Activated B cell treated with CpG ODN at 0.5 μM for 24 hours (primary cell): ENCODE measurements at regions of chr4 and their contacts with region 1.

Region 1: GRCh38 chr4:74311696-74312313 is 3.5 kb downstream of the EPGN start:
- DNase-seq: no peak
- ATAC-seq: peak; percentile 40
- H3K4me3 Mint-ChIP-seq: no peak overlapping the region
- H3K27ac Mint-ChIP-seq: no peak overlapping the region
- H3K4me1 Mint-ChIP-seq: peaks cover 5% of the 10 kb centered on the region
- H3K27me3 Mint-ChIP-seq: no peaks in the 10 kb centered on the region
- CTCF ChIP-seq: no peak

Region 2: GRCh38 chr4:73662709-73663546 is 648.9 kb before region 1 on chr4:
- CTCF ChIA-PET with region 1: no interaction called
- POLR2A ChIA-PET with region 1: no interaction called
- intact Hi-C with region 1: loop called (anchors 10 kb)
- DNase-seq: no peak
- ATAC-seq: no peak
- H3K4me3 Mint-ChIP-seq: no peak overlapping the region
- H3K27ac Mint-ChIP-seq: no peak overlapping the region
- H3K4me1 Mint-ChIP-seq: no peaks in the 10 kb centered on the region
- H3K27me3 Mint-ChIP-seq: no peaks in the 10 kb centered on the region
- CTCF ChIP-seq: no peak

Region 3: GRCh38 chr4:73729534-73730165 is 582.2 kb before region 1 on chr4:
- CTCF ChIA-PET with region 1: no interaction called
- POLR2A ChIA-PET with region 1: no interaction called
- intact Hi-C with region 1: loop called (anchors 5 kb)
- DNase-seq: no peak
- ATAC-seq: no peak
- H3K4me3 Mint-ChIP-seq: no peak overlapping the region
- H3K27ac Mint-ChIP-seq: no peak overlapping the region
- H3K4me1 Mint-ChIP-seq: no peaks in the 10 kb centered on the region
- H3K27me3 Mint-ChIP-seq: peaks cover 7% of the 10 kb centered on the region
- CTCF ChIP-seq: no peak

Region 4: DNA sequence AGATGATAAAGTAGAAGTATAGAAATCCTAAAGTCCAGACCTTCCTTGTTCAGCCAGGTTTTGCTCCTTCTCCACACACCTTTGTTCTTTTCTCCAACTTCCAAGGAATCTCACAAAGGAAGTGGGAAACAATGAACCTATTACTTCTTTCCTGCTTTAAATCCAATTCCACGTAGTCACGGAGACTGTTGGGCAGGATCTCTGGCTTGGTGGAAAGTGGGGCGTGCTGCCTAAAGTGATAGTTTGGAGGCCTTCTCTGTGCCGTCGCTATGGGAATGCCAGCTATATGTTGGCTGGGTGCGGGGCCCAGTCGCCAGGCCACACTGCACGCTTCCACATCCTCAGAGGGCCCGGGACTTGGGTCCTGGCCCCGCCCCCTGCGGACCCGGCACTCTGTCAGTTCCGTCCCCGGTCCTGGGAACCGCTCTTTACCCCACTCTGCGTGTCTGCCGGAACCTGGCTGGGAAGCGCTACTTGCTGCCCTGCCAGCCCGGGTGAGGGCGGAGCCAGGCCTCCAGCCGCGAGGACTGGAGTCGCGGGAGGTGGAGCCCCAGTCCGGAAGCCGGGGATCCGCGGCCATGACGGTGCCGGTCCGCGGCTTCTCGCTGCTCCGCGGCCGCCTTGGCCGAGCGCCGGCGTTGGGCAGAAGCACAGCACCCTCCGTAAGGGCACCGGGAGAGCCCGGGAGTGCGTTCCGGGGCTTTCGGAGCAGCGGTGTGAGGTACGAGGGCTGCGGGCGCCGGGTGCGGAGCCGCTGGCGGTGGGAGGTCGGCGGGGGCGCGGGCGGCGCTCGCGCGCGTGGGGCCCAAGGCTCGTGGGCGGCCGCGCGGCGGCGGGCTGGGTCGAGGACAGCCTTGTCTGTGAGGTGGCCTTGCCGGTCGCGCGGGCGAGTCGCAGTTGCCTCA is 154.0 kb before region 1 on chr4 and contains the start of gene MTHFD2L:
- CTCF ChIA-PET with region 1: no interaction called
- POLR2A ChIA-PET with region 1: no interaction called
- intact Hi-C with region 1: no loop called
- DNase-seq: peak; percentile 83
- ATAC-seq: peak; percentile 97
- H3K4me3 Mint-ChIP-seq: peak within 1 kb of the TSS; percentile 92
- H3K27ac Mint-ChIP-seq: peak within 1 kb of the TSS; percentile 80
- H3K4me1 Mint-ChIP-seq: peaks cover 18% of the 10 kb centered on the region
- H3K27me3 Mint-ChIP-seq: peaks cover 6% of the 10 kb centered on the region
- CTCF ChIP-seq: no peak
- total RNA-seq, gene MTHFD2L: 12.0 and 14.3 TPM in 2 replicates

Region 5: DNA sequence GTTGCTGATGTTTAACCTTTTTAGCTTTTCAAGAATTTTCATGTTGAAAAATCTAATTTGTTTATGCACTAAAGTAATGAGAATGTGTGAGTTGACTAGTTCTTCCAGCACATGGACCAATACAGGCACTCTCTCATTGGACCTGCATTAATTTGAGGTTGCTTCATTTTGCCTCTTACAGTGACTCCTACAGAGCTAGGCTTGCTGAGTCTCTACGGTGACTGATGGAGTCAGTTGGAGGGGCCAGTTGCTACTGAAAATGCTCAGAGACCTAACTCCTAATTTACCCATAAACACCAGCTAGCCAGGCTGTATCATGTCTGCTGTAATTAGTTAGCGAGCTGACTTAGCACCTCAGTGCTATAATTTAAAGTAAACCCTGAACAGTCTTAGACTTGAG is 143.0 kb before region 1 on chr4:
- CTCF ChIA-PET with region 1: no interaction called
- POLR2A ChIA-PET with region 1: no interaction called
- intact Hi-C with region 1: no loop called
- DNase-seq: no peak
- ATAC-seq: no peak
- H3K4me3 Mint-ChIP-seq: no peak overlapping the region
- H3K27ac Mint-ChIP-seq: no peak overlapping the region
- H3K4me1 Mint-ChIP-seq: peaks cover 12% of the 10 kb centered on the region
- H3K27me3 Mint-ChIP-seq: no peaks in the 10 kb centered on the region
- CTCF ChIP-seq: no peak

Region 6: DNA sequence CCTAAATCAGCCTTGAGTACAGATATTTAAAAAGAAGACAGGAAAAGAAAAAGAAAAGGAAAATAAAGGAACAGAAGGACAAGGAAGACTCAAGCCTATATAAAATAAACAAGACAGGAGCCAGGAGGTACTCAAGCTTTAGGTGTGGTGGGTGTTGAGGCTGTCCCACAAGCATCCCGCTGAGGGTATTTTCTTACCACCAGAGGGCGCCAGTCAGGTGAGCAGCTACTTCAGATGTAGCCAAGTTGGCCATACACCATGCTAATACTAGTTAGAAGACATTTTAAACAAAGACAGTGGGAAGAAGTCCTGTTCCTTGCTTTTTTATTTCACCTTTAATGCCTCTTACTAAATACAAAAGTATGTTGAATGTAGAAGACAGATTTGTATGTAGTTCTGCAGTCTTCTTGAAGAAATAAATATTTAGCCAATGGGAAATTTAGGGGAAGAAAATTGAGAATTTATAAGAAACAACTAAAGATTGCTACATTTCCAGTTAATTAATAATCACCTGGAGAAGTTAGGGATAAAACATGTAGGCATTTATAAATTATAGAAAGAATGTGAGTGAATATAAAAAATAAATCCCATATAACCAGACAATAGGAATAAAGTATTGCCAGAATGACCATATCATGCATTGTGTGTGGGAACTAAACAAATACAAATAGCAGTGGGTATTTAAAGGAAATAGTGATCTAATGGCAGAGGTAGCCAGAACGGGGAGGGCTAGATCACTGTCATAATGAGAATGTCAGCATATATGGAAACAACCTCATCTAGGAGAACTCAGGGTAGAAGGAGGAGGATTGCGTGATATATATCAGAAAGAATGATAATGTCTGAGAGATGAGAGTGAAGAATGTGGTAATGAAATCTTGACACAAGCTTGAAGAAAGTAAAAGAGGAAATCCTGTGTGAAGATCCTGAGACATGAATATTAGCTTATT is 82.8 kb before region 1 on chr4:
- CTCF ChIA-PET with region 1: no interaction called
- POLR2A ChIA-PET with region 1: no interaction called
- intact Hi-C with region 1: loop called (anchors 1 kb)
- DNase-seq: peak; percentile 36
- ATAC-seq: peak; percentile 78
- H3K4me3 Mint-ChIP-seq: no peak overlapping the region
- H3K27ac Mint-ChIP-seq: no peak overlapping the region
- H3K4me1 Mint-ChIP-seq: no peaks in the 10 kb centered on the region
- H3K27me3 Mint-ChIP-seq: no peaks in the 10 kb centered on the region
- CTCF ChIP-seq: peak; percentile 60

Region 7: DNA sequence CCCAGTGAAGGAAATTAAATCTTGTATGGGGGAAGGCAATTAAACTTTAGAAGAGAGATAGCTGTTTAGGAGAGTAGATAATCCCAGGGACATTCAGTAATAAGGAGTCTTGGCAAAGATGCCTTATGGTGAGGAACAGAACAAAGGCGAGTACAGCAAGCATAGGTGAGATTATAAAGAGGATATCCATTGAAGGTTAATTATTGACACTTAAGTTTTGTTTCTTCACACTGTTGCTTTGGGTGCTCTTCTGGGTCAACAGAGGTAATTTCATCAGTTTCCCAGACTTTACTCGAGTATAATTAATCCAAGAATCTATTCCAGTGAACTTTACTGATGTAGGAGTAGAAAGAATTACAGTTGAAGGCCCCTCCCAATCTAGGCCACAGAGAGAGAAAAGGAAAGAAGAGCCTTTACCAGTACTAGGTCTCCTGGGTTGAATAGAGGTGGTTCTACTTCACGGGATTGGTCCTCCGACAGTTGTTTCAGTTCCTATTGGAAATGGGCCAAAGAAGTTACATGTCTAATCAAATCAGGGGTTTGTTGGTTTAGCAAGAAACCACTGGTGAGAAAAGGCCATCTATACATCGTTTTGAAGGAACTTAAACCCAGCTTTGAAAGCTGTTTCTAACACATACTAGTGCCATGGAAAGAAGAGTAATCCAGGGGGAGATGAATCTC is 23.7 kb after region 1 on chr4:
- CTCF ChIA-PET with region 1: no interaction called
- POLR2A ChIA-PET with region 1: no interaction called
- intact Hi-C with region 1: no loop called
- DNase-seq: no peak
- ATAC-seq: peak; percentile 58
- H3K4me3 Mint-ChIP-seq: no peak overlapping the region
- H3K27ac Mint-ChIP-seq: no peak overlapping the region
- H3K4me1 Mint-ChIP-seq: peaks cover 7% of the 10 kb centered on the region
- H3K27me3 Mint-ChIP-seq: peaks cover 5% of the 10 kb centered on the region
- CTCF ChIP-seq: no peak